Activated CD4-positive, alpha-beta memory T cell treated with anti-CD3 and anti-CD28 coated beads, Interleukin-2, amount 10 ng/mL, durations not matched to agents 7 days and 5 days (primary cell): ENCODE measurements at regions of chr9 and their contacts with region 1.

Region 1: GRCh38 chr9:120868676-120869359 is 8.2 kb downstream of the PHF19 start:
- DNase-seq: peak; percentile 97
- H3K4me3 Mint-ChIP-seq: peak overlapping the region; percentile 87
- H3K27ac Mint-ChIP-seq: peak overlapping the region; percentile 92
- H3K4me1 Mint-ChIP-seq: peaks cover 52% of the 10 kb centered on the region
- H3K27me3 Mint-ChIP-seq: no peaks in the 10 kb centered on the region

Region 2: DNA sequence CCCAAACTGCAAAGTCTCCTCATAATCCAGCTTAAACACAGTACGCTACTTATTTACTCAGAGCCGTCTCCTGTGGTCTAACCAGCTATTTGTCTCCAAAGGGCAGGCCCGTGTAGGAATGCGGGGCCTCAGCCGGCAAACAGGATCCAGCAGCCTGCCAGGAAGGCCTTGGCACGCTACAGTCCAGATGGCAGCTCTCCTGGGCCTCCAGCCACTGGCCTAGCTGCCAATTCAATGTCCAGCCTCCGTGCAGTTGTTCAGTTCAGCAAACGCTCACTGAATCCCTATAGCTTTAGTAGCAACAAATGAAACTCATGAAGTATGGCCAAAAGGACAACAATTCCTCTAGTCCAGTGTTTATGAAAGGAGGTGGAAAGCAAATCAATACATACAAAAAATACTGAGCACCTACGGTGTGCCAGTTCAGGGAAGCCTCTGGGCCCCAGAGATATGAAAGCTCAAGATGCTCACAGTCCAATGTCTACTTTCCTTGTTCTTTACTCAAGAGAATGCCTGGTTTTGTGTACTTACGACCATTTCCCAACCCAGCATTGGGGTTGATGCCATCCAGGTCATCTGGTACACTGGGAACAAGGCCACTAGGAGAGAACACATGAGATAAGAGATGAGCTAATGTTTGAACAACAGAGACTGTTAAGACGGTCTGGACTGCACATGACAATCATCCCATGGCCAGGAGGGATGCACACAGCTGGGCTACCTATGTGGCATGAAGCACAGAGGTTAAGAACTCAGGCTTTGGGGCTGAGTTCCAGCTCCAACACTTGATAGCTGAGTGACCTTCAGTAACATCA is 297.2 kb before region 1 on chr9:
- CTCF ChIA-PET with region 1: no interaction called
- POLR2A ChIA-PET with region 1: no interaction called
- DNase-seq: no peak
- H3K4me3 Mint-ChIP-seq: no peak overlapping the region
- H3K27ac Mint-ChIP-seq: no peak overlapping the region
- H3K4me1 Mint-ChIP-seq: peaks cover 20% of the 10 kb centered on the region
- H3K27me3 Mint-ChIP-seq: no peaks in the 10 kb centered on the region

Region 3: GRCh38 chr9:120723547-120723946 is 145.3 kb before region 1 on chr9:
- CTCF ChIA-PET with region 1: no interaction called
- POLR2A ChIA-PET with region 1: no interaction called
- DNase-seq: no peak
- H3K4me3 Mint-ChIP-seq: no peak overlapping the region
- H3K27ac Mint-ChIP-seq: no peak overlapping the region
- H3K4me1 Mint-ChIP-seq: peaks cover 13% of the 10 kb centered on the region
- H3K27me3 Mint-ChIP-seq: no peaks in the 10 kb centered on the region

Region 4: GRCh38 chr9:120856700-120857099 is 12.1 kb before region 1 on chr9:
- CTCF ChIA-PET with region 1: interaction called, 4 read pairs
- POLR2A ChIA-PET with region 1: interaction called, 17 read pairs
- DNase-seq: no peak
- H3K4me3 Mint-ChIP-seq: no peak overlapping the region
- H3K27ac Mint-ChIP-seq: no peak overlapping the region
- H3K4me1 Mint-ChIP-seq: peaks cover 6% of the 10 kb centered on the region
- H3K27me3 Mint-ChIP-seq: no peaks in the 10 kb centered on the region

Region 5: DNA sequence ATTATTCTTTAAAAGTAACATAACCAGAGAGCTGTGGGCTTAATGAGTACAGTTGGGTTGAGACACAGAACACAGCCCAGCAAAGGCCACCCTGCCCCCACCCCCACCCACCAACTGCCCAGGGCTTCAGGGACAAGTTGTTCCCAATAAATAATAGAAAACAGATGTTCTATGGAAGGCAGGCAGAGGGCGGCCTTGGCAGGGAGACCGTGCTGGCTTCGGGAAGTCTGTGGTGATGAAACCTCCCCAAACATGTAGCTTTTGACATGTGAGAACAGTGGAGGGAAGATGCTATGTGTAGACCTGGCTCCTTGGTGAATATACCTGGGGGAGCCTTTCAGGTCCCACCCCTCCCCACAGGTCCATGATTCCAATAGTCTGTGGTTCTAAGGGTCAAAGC is 47.8 kb after region 1 on chr9:
- CTCF ChIA-PET with region 1: interaction called, 12 read pairs
- POLR2A ChIA-PET with region 1: interaction called, 864 read pairs
- DNase-seq: no peak
- H3K4me3 Mint-ChIP-seq: peak overlapping the region; percentile 35
- H3K27ac Mint-ChIP-seq: peak overlapping the region; percentile 82
- H3K4me1 Mint-ChIP-seq: peaks cover 85% of the 10 kb centered on the region
- H3K27me3 Mint-ChIP-seq: no peaks in the 10 kb centered on the region

Region 6: DNA sequence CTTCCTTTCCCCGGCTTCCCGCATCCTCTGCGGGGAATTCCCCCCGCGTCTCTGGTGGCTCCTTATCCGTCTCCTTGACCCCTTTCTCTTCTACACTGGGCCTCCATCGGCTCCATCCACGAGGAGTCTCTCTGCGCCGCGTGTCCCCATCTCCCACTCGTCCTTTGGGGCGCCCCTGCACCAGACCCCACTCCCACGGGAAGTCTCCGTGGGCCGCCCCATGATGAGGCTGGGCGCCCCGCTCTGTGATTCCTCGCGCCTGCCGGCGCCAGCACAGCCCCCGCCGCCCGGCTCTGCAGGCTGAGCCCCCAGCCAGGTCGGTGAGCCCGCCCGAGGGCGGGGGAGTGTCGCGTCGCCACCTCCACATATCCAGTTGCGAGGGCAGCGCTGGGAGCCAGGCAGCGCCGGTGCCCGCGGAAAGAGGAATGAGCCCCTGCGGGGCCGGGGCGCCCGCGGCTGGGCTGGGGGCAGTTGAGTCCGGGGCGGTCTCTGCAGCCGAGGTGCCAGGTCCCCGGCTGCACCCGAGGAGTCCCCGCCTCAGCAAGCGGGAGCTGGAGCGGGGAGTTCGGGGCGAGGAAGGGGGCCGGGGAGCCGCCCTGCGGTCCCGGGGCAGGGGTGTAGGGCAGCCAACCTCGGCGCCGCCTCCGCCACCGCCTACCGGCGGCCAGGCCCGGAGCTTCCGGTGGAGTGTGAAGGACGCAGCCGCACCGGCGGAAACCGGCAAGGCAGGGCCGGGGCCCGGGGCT is 59.8 kb after region 1 on chr9:
- CTCF ChIA-PET with region 1: interaction called, 66 read pairs
- POLR2A ChIA-PET with region 1: interaction called, 864 read pairs
- DNase-seq: peak; percentile 86
- H3K4me3 Mint-ChIP-seq: peak overlapping the region; percentile 93
- H3K27ac Mint-ChIP-seq: peak overlapping the region; percentile 100
- H3K4me1 Mint-ChIP-seq: peaks cover 79% of the 10 kb centered on the region
- H3K27me3 Mint-ChIP-seq: no peaks in the 10 kb centered on the region

Region 7: GRCh38 chr9:120936011-120936763 is 67.4 kb after region 1 on chr9:
- CTCF ChIA-PET with region 1: interaction called, 66 read pairs
- POLR2A ChIA-PET with region 1: interaction called, 864 read pairs
- DNase-seq: peak; percentile 89
- H3K4me3 Mint-ChIP-seq: peak overlapping the region; percentile 51
- H3K27ac Mint-ChIP-seq: peak overlapping the region; percentile 76
- H3K4me1 Mint-ChIP-seq: peaks cover 59% of the 10 kb centered on the region
- H3K27me3 Mint-ChIP-seq: peaks cover 7% of the 10 kb centered on the region

Region 8: GRCh38 chr9:120961936-120962335 is 93.1 kb after region 1 on chr9:
- CTCF ChIA-PET with region 1: no interaction called
- POLR2A ChIA-PET with region 1: no interaction called
- DNase-seq: no peak
- H3K4me3 Mint-ChIP-seq: no peak overlapping the region
- H3K27ac Mint-ChIP-seq: no peak overlapping the region
- H3K4me1 Mint-ChIP-seq: no peaks in the 10 kb centered on the region
- H3K27me3 Mint-ChIP-seq: peaks cover 6% of the 10 kb centered on the region

Region 9: GRCh38 chr9:120974921-120975320 is 106.1 kb after region 1 on chr9:
- CTCF ChIA-PET with region 1: no interaction called
- POLR2A ChIA-PET with region 1: no interaction called
- DNase-seq: no peak
- H3K4me3 Mint-ChIP-seq: no peak overlapping the region
- H3K27ac Mint-ChIP-seq: no peak overlapping the region
- H3K4me1 Mint-ChIP-seq: peaks cover 16% of the 10 kb centered on the region
- H3K27me3 Mint-ChIP-seq: no peaks in the 10 kb centered on the region

Region 10: GRCh38 chr9:121074635-121075385 is 206.0 kb after region 1 on chr9 and contains the start of gene CNTRL:
- CTCF ChIA-PET with region 1: interaction called, 3 read pairs
- POLR2A ChIA-PET with region 1: interaction called, 13 read pairs
- DNase-seq: peak; percentile 93
- H3K4me3 Mint-ChIP-seq: peak within 1 kb of the TSS; percentile 96
- H3K27ac Mint-ChIP-seq: peak within 1 kb of the TSS; percentile 91
- H3K4me1 Mint-ChIP-seq: peaks cover 53% of the 10 kb centered on the region
- H3K27me3 Mint-ChIP-seq: no peaks in the 10 kb centered on the region
- total RNA-seq, gene CNTRL: 84.1 to 86.9 TPM